ENCODE measurements at regions of chr5 and their contacts with region 1.

Region 1: GRCh38 chr5:176447982-176448608 is at the start of gene FAF2:
- DNase-seq: peak; percentile 97 to 100
- H3K4me3 ChIP-seq: peak within 1 kb of the TSS; percentile 93 to 100 (median 98)
- H3K27ac ChIP-seq: peak within 1 kb of the TSS; percentile 97
- H3K4me1 ChIP-seq: peaks cover 0 to 4% (median 0%) of the 10 kb centered on the region in 4 experiments; a peak in 1 of 7 replicates
- H3K27me3 ChIP-seq: no peaks in the 10 kb centered on the region
- CTCF ChIP-seq: peak; percentile 77 to 95 (median 82)
- EP300 ChIP-seq: no peak
- POLR2A ChIP-seq: peak; percentile 92 to 93
- RAD21 ChIP-seq: 0 out of 4 replicates have a peak, but pooled peaks of 1 of the 2 experiments have one; percentile 7
- total RNA-seq, gene FAF2: 35.8 and 36.2 TPM in 2 replicates

Region 2: GRCh38 chr5:176415952-176416924 is 31.9 kb before region 1 on chr5 and contains the start of gene CLTB:
- CTCF ChIA-PET with region 1: interaction called, 15 read pairs
- POLR2A ChIA-PET with region 1: interaction called, 8 read pairs
- DNase-seq: peak; percentile 70 to 85
- H3K4me3 ChIP-seq: peak within 1 kb of the TSS; percentile 40 to 77 (median 70)
- H3K27ac ChIP-seq: no peak within 1 kb of the TSS; the same call in 1 of the 2 replicates
- H3K4me1 ChIP-seq: peaks cover 0 to 3% (median 0%) of the 10 kb centered on the region in 4 experiments; a peak in 4 of 7 replicates
- H3K27me3 ChIP-seq: peaks cover 0 to 11% (median 9%) of the 10 kb centered on the region in 4 experiments; a peak in 6 of 7 replicates
- CTCF ChIP-seq: peak; percentile 59 to 84 (median 76)
- EP300 ChIP-seq: peak in 1 of 2 experiments; percentile 49; a peak in 1 of 3 replicates
- POLR2A ChIP-seq: no peak
- RAD21 ChIP-seq: peak; percentile 68 to 91
- total RNA-seq, gene CLTB: 25.9 and 29.2 TPM in 2 replicates

Region 3: DNA sequence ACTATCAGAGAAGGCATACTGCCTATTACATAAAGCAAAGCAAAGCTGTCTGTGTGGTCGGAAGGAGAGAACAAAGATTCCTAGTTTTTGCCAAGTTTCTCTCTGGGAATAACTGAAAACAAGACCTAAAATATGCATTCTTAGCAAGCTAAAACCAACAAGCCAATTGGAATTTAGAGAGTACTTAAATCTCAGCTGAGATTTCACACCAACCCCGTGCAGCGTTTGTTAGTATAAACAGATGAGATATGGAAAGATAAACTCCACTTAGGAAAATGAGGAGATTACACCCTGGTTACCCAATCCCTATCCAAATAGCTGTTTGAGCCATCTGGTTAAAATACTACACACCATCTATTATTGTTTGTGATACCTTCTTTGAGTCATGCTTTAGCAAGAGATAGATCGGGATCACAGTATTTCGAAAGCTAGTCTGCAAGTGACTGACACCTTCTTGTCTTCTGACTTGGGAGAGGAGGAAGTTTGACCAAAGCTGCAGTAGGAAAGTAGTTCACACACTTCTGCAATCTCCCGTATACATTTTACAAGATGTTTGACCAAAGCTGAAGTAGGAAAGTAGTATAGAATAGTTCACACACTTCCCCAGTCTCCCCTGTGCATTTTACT is 18.3 kb after region 1 on chr5:
- CTCF ChIA-PET with region 1: interaction called, 3 read pairs
- POLR2A ChIA-PET with region 1: interaction called, 14 read pairs
- DNase-seq: no peak
- H3K4me3 ChIP-seq: no peak overlapping the region
- H3K27ac ChIP-seq: no peak overlapping the region
- H3K4me1 ChIP-seq: no peaks in the 10 kb centered on the region
- H3K27me3 ChIP-seq: no peaks in the 10 kb centered on the region
- CTCF ChIP-seq: no peak
- EP300 ChIP-seq: no peak
- POLR2A ChIP-seq: no peak
- RAD21 ChIP-seq: no peak